GM12878 (cell line): ENCODE measurements at regions of chr1 and their contacts with region 1.

Region 1: DNA sequence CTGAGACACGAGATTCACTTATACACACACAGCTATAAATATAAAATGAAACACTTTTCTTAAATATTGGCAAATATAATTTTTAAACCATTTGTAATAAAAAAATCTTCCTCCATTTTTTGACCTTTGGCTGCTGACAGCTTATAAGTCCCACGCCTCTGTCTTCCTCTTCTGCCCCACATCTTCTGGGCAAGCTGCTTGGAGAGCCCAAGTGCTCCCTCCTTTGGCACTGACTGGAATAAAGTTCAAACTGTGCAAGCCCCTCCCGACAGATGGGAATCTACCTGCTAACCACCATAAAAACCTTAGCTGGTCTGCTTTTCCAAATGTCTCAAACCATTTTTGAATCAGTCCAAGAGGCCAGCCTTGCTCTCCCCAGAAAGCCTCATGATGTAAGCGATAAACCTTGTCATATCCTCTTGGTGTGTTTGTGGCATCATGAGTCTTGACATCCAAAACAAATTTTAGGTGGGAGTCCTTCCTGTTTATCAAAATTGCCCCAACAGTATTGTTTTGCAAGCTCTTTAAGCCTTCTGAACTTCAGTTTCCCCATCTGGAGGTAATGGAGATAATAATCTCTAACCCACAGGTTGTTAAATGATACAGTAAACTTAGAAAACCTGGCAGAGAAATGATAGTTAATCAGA is 99.8 kb downstream of the SNX7 start:
- DNase-seq: no peak
- ATAC-seq: peak; percentile 58; the same call in 1 of the 3 replicates
- H3K4me3 ChIP-seq: no peak overlapping the region
- H3K27ac ChIP-seq: no peak overlapping the region
- H3K4me1 ChIP-seq: no peaks in the 10 kb centered on the region
- H3K27me3 ChIP-seq: no peaks in the 10 kb centered on the region
- CTCF ChIP-seq: peak in 1 of 3 experiments; percentile 37; a peak in 2 of 6 replicates
- EP300 ChIP-seq: no peak
- POLR2A ChIP-seq: no peak
- RAD21 ChIP-seq: peak; percentile 31; the same call in 1 of the 2 replicates

Region 2: GRCh38 chr1:98336472-98337083 is 424.8 kb before region 1 on chr1:
- CTCF ChIA-PET with region 1: no interaction called
- POLR2A ChIA-PET with region 1: no interaction called
- RAD21 ChIA-PET with region 1: no interaction called
- SMC1A ChIA-PET with region 1: no interaction called
- in situ Hi-C with region 1: no loop called
- intact Hi-C with region 1: no loop called
- DNase-seq: no peak
- ATAC-seq: no peak
- H3K4me3 ChIP-seq: no peak overlapping the region
- H3K27ac ChIP-seq: no peak overlapping the region
- H3K4me1 ChIP-seq: no peaks in the 10 kb centered on the region
- H3K27me3 ChIP-seq: no peaks in the 10 kb centered on the region
- CTCF ChIP-seq: no peak
- EP300 ChIP-seq: no peak
- POLR2A ChIP-seq: no peak
- RAD21 ChIP-seq: no peak

Region 3: DNA sequence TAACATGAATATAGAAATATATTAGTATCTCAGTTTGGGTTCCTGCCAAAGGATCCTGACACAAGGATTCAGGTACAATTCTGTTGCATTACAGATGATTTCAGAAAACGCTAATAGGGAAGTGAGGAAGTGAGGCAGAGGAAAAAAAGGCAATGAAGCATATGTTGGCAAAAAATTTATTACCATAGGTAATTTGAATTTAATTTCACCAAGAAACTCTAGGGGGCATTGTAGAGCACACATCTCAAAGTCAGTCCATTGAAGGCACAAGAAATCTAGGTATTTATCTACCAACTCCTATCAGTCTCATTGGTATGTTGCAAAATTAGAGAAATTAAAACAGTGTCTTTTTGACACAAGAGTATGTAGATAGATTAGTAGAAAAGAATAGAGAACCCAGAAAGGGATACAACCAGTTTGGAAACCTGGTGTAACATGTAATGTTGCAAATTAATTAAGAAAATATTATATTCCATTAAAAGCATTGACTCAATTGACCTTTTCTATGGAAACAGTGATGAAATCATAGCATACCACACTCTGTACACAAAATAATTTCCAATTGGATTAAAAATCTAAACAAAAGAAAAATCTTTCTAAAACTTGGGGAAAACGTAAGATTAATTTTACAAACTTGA is 204.7 kb before region 1 on chr1:
- CTCF ChIA-PET with region 1: interaction called, 8 read pairs
- POLR2A ChIA-PET with region 1: no interaction called
- RAD21 ChIA-PET with region 1: no interaction called
- SMC1A ChIA-PET with region 1: interaction called, 4 read pairs
- in situ Hi-C with region 1: no loop called
- intact Hi-C with region 1: loop called (anchors 10 kb)
- DNase-seq: no peak
- ATAC-seq: 0 out of 3 replicates have a peak, but pooled peaks have one; percentile 33
- H3K4me3 ChIP-seq: no peak overlapping the region
- H3K27ac ChIP-seq: no peak overlapping the region
- H3K4me1 ChIP-seq: no peaks in the 10 kb centered on the region
- H3K27me3 ChIP-seq: no peaks in the 10 kb centered on the region
- CTCF ChIP-seq: peak; percentile 28 to 40 (median 31); a peak in 3 of 6 replicates
- EP300 ChIP-seq: no peak
- POLR2A ChIP-seq: no peak
- RAD21 ChIP-seq: no peak

Region 4: GRCh38 chr1:98749152-98749756 is 12.1 kb before region 1 on chr1:
- CTCF ChIA-PET with region 1: interaction called, 57 read pairs
- POLR2A ChIA-PET with region 1: no interaction called
- RAD21 ChIA-PET with region 1: interaction called, 5 read pairs
- SMC1A ChIA-PET with region 1: interaction called, 42 read pairs
- in situ Hi-C with region 1: no loop called
- intact Hi-C with region 1: no loop called
- DNase-seq: no peak
- ATAC-seq: peak; percentile 59
- H3K4me3 ChIP-seq: no peak overlapping the region
- H3K27ac ChIP-seq: no peak overlapping the region
- H3K4me1 ChIP-seq: no peaks in the 10 kb centered on the region
- H3K27me3 ChIP-seq: no peaks in the 10 kb centered on the region
- CTCF ChIP-seq: peak; percentile 18 to 42 (median 22); a peak in 2 of 6 replicates
- EP300 ChIP-seq: no peak
- POLR2A ChIP-seq: no peak
- RAD21 ChIP-seq: peak; percentile 31; the same call in 1 of the 2 replicates

Region 5: DNA sequence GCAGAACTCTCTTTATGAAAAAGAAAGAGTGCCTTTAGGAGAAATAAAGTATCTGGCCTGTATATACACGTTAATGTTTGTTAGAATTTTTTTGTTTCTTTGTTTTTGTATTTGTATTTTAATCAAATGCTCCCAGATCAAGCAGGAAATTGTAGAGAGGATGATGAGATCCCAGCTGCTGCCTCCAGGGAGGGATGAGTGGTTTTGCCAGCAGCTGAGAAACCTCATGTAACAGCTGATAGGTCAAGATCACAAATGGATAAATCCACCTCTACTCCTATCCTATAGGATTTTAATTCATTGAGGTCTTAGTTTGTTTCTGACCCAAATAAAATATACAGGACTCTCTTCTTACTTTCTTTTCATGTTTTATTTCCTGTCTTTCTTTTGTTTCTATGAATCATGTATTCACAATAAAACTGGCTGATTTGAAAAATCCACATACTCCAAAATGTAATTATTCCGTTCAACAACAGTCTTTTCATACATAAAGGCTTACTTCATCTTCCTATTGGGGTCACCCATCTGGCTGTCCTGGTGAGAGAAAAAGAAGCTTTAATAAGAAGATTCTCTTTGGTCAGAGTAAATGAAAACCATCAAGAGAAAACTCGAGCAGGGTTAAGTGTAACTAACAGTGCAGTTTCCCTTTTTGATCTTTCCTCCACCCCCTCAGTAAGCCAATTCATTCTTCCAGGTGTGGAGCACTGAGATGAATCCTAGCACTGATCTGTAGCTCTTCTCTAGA is 372.6 kb after region 1 on chr1:
- CTCF ChIA-PET with region 1: no interaction called
- POLR2A ChIA-PET with region 1: no interaction called
- RAD21 ChIA-PET with region 1: no interaction called
- SMC1A ChIA-PET with region 1: no interaction called
- in situ Hi-C with region 1: no loop called
- intact Hi-C with region 1: no loop called
- DNase-seq: no peak
- ATAC-seq: no peak
- H3K4me3 ChIP-seq: no peak overlapping the region
- H3K27ac ChIP-seq: no peak overlapping the region
- H3K4me1 ChIP-seq: no peaks in the 10 kb centered on the region
- H3K27me3 ChIP-seq: no peaks in the 10 kb centered on the region
- CTCF ChIP-seq: no peak
- EP300 ChIP-seq: no peak
- POLR2A ChIP-seq: no peak
- RAD21 ChIP-seq: no peak